G401 (cell line): ENCODE measurements at regions of chr6 and their contacts with region 1.

Region 1: DNA sequence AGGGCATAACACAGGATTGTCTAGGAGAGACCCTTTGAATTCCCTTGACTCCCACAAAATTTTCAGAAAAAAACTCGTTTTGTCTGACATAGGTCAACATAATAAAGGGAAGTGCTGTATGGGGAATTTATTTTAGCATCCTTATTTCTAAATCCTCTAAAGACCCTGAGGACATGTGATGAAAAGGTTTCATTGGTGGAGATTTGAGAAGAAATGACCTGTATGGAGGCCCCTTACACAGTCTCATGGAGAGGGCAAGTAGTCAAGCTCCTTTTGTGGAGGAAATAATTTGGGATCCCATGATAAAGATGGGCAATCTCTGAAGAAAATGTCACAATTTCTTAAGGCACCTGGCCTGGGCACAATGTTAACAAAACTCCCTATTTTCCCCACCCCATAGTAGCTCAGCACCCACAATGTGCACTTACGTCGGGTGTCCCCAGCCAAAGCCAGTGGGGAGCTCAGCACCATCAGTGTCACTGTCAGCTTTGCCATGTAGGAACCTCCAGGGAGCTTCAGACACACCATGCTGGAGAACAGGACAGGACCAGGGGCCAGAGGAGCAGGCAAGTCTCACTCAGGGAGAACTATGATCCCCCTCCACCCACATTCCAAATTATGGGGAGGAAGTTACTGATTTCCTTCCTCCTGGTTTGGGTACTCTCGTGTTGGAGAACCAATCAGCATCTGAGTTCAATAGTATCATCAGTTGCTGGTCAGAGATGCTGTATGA is at the start of gene HLA-DRB5:
- DNase-seq: no peak
- total RNA-seq, gene HLA-DRB5: not detected in 2 replicates

Region 2: GRCh38 chr6:32589598-32590449 is 60.0 kb after region 1 on chr6 and contains the start of gene HLA-DRB1:
- in situ Hi-C with region 1: loop called (anchors 5 kb)
- DNase-seq: peak; percentile 9
- total RNA-seq, gene HLA-DRB1: not detected in 2 replicates